Activated CD4-positive, alpha-beta T cell treated with anti-CD3 and anti-CD28 coated beads for 36 hours (primary cell): ENCODE measurements at regions of chr14 and their contacts with region 1.

Region 1: GRCh38 chr14:89973234-89973823 is 17.6 kb downstream of the TDP1 start:
- DNase-seq: peak; percentile 70
- ATAC-seq: peak; percentile 63
- H3K4me3 Mint-ChIP-seq: no peak overlapping the region
- H3K27ac Mint-ChIP-seq: no peak overlapping the region
- H3K4me1 Mint-ChIP-seq: no peaks in the 10 kb centered on the region
- H3K27me3 Mint-ChIP-seq: no peaks in the 10 kb centered on the region

Region 2: GRCh38 chr14:89947344-89947743 is 26.0 kb before region 1 on chr14:
- CTCF ChIA-PET with region 1: no interaction called
- POLR2A ChIA-PET with region 1: no interaction called
- intact Hi-C with region 1: no loop called
- DNase-seq: no peak
- ATAC-seq: peak; percentile 16
- H3K4me3 Mint-ChIP-seq: no peak overlapping the region
- H3K27ac Mint-ChIP-seq: no peak overlapping the region
- H3K4me1 Mint-ChIP-seq: peaks cover 8% of the 10 kb centered on the region
- H3K27me3 Mint-ChIP-seq: no peaks in the 10 kb centered on the region

Region 3: DNA sequence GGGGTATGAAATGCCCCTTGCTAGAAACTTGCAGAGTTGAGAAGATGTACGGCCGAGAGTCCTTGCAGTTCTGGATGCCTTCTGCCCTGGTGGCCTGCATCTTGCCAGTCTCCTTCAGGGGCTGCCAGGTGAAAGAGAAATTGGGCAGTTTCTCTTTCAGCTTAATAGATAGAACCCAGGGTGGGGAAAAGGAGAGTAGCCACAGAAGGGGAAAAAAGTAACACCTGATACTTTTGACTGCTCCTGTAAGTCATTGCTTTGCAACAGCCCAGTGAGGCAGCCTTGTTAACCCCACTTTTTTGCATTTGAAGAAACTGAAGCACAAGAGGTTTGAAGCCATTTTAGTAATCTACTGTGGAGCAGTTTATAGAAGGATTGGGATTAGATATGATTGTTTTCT is 10.0 kb after region 1 on chr14:
- CTCF ChIA-PET with region 1: interaction called, 20 read pairs
- POLR2A ChIA-PET with region 1: no interaction called
- intact Hi-C with region 1: no loop called
- DNase-seq: no peak
- ATAC-seq: no peak
- H3K4me3 Mint-ChIP-seq: no peak overlapping the region
- H3K27ac Mint-ChIP-seq: no peak overlapping the region
- H3K4me1 Mint-ChIP-seq: no peaks in the 10 kb centered on the region
- H3K27me3 Mint-ChIP-seq: no peaks in the 10 kb centered on the region

Region 4: GRCh38 chr14:90060312-90060964 is 87.1 kb after region 1 on chr14:
- CTCF ChIA-PET with region 1: interaction called, 5 read pairs
- POLR2A ChIA-PET with region 1: no interaction called
- intact Hi-C with region 1: loop called in 1 of 2 experiments (anchors 1 kb)
- DNase-seq: peak; percentile 77
- ATAC-seq: peak; percentile 86
- H3K4me3 Mint-ChIP-seq: peak overlapping the region; percentile 64
- H3K27ac Mint-ChIP-seq: no peak overlapping the region
- H3K4me1 Mint-ChIP-seq: peaks cover 24% of the 10 kb centered on the region
- H3K27me3 Mint-ChIP-seq: peaks cover 64% of the 10 kb centered on the region

Region 5: GRCh38 chr14:90235179-90235976 is 262.0 kb after region 1 on chr14:
- CTCF ChIA-PET with region 1: interaction called, 5 read pairs
- POLR2A ChIA-PET with region 1: no interaction called
- intact Hi-C with region 1: loop called (anchors 1 kb)
- DNase-seq: peak; percentile 82
- ATAC-seq: peak; percentile 61
- H3K4me3 Mint-ChIP-seq: no peak overlapping the region
- H3K27ac Mint-ChIP-seq: no peak overlapping the region
- H3K4me1 Mint-ChIP-seq: no peaks in the 10 kb centered on the region
- H3K27me3 Mint-ChIP-seq: peaks cover 7% of the 10 kb centered on the region